ENCODE measurements at regions of chr17 and their contacts with region 1.

Region 1: GRCh38 chr17:50638851-50639767 is 4.4 kb downstream of the ABCC3 start:
- DNase-seq: peak; percentile 99
- ATAC-seq: peak; percentile 74
- H3K4me3 ChIP-seq: peak overlapping the region; percentile 19 to 43
- H3K27ac ChIP-seq: peak overlapping the region; percentile 95
- H3K4me1 ChIP-seq: peaks cover 82 to 93% of the 10 kb centered on the region in 2 experiments
- H3K27me3 ChIP-seq: no peaks in the 10 kb centered on the region
- CTCF ChIP-seq: no peak
- POLR2A ChIP-seq: peak; percentile 14
- RAD21 ChIP-seq: no peak

Region 2: GRCh38 chr17:50649042-50649904 is 10.2 kb after region 1 on chr17:
- CTCF ChIA-PET with region 1: interaction called, 7 read pairs
- POLR2A ChIA-PET with region 1: interaction called, 40 read pairs
- RAD21 ChIA-PET with region 1: no interaction called
- intact Hi-C with region 1: no loop called
- DNase-seq: peak; percentile 55
- ATAC-seq: peak; percentile 53; the same call in 1 of the 2 replicates
- H3K4me3 ChIP-seq: no peak overlapping the region
- H3K27ac ChIP-seq: no peak overlapping the region
- H3K4me1 ChIP-seq: peaks cover 12 to 40% of the 10 kb centered on the region in 2 experiments; a peak in 3 of 4 replicates
- H3K27me3 ChIP-seq: no peaks in the 10 kb centered on the region
- CTCF ChIP-seq: no peak
- POLR2A ChIP-seq: no peak
- RAD21 ChIP-seq: no peak

Region 3: GRCh38 chr17:50661795-50662391 is 22.8 kb after region 1 on chr17:
- CTCF ChIA-PET with region 1: interaction called, 12 read pairs
- POLR2A ChIA-PET with region 1: interaction called, 59 read pairs
- RAD21 ChIA-PET with region 1: interaction called in 1 of 2 experiments, 7 read pairs
- intact Hi-C with region 1: loop called (anchors 2 kb)
- DNase-seq: peak; percentile 92
- ATAC-seq: peak; percentile 82
- H3K4me3 ChIP-seq: peak overlapping the region; percentile 19 to 44
- H3K27ac ChIP-seq: peak overlapping the region; percentile 96
- H3K4me1 ChIP-seq: peaks cover 61 to 91% of the 10 kb centered on the region in 2 experiments
- H3K27me3 ChIP-seq: no peaks in the 10 kb centered on the region
- CTCF ChIP-seq: no peak
- POLR2A ChIP-seq: no peak
- RAD21 ChIP-seq: no peak

Region 4: DNA sequence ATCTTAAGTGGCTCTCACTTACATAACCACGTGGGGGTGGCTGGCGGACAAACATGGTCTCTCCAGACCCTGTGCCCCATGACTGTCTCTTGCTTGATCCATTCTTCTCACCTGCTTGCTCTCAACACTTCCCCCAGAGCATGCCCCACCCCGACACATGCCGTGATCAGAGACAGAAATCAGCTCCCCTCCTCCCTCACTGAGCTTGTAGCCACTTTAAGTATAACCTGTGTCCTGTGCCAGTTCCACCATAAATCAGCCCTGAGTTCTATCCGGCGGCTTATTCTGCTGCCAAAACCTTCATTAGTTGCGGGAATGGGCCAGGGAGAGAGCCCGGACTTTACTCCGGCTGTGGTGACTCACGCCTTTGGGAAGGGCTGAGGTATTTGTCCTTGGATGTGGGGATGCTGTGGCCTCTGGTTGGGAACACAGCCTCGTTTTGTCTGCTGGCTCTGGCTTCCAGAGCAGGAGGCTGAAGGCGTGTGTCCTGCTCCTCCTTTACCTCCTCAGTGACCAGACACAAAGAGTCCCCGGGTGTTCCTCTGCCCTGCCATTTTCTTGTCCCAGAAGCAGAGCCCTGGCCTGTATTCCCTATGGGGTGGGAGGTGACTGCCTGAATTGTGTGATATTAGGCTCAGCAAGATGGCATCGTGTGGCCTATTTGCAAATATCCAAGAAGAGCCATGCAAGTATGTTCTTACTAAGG is 47.5 kb after region 1 on chr17:
- CTCF ChIA-PET with region 1: interaction called, 6 read pairs
- POLR2A ChIA-PET with region 1: interaction called, 36 read pairs
- RAD21 ChIA-PET with region 1: interaction called, 4 read pairs
- intact Hi-C with region 1: loop called (anchors 2 kb)
- DNase-seq: peak; percentile 92
- ATAC-seq: peak; percentile 74
- H3K4me3 ChIP-seq: peak overlapping the region; percentile 13 to 46
- H3K27ac ChIP-seq: peak overlapping the region; percentile 97
- H3K4me1 ChIP-seq: peaks cover 83 to 98% of the 10 kb centered on the region in 2 experiments
- H3K27me3 ChIP-seq: no peaks in the 10 kb centered on the region
- CTCF ChIP-seq: no peak
- POLR2A ChIP-seq: peak; percentile 33
- RAD21 ChIP-seq: no peak; the same call in 1 of the 2 replicates

Region 5: DNA sequence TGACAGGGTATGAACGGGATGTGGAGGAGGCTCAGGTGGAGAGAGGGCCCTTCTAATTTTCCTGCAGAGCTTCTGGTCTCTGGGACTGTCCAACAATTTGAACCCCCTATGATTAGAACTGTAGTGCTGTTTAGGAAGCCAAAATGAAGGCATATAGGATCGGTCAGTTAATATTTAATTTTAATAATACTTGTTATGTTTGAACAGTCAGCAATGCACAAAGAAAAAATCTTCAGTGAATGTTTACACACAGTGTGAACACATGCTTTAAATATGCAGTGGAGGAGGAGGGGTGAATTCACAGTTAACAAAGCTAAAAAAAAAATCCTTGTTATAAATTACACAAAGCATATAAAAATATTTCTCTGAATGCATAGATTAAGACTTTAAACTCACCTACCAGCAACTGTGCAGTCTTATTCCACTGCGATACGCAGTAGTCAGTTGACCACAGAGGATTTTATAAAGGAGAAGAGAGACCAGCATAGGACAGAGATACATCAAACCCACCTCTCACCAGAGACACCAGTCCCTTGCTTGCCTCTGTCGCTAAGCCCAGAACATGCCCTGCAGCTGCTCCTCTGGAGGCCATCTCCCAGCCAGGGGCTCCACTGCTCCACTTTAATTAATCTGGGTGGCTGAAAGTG is 54.0 kb after region 1 on chr17:
- CTCF ChIA-PET with region 1: interaction called, 18 read pairs
- POLR2A ChIA-PET with region 1: interaction called, 6 read pairs
- RAD21 ChIA-PET with region 1: no interaction called
- intact Hi-C with region 1: no loop called
- DNase-seq: no peak
- ATAC-seq: no peak
- H3K4me3 ChIP-seq: no peak overlapping the region
- H3K27ac ChIP-seq: no peak overlapping the region
- H3K4me1 ChIP-seq: peaks cover 45 to 65% of the 10 kb centered on the region in 2 experiments
- H3K27me3 ChIP-seq: no peaks in the 10 kb centered on the region
- CTCF ChIP-seq: no peak
- POLR2A ChIP-seq: no peak
- RAD21 ChIP-seq: no peak